HEK293 (cell line): ENCODE measurements at regions of chr11 and their contacts with region 1.

Region 1: GRCh38 chr11:35305670-35306382 is 113.5 kb downstream of the SLC1A2 start:
- H3K4me3 ChIP-seq: no peak overlapping the region
- H3K27ac ChIP-seq: no peak overlapping the region
- H3K4me1 ChIP-seq: no peaks in the 10 kb centered on the region
- CTCF ChIP-seq: peak; percentile 30; the same call in 1 of the 2 replicates

Region 2: GRCh38 chr11:34926101-34926830 is 379.6 kb before region 1 on chr11:
- CTCF ChIA-PET with region 1: interaction called, 10 read pairs
- POLR2A ChIA-PET with region 1: no interaction called
- H3K4me3 ChIP-seq: no peak overlapping the region
- H3K27ac ChIP-seq: no peak overlapping the region
- H3K4me1 ChIP-seq: 0 out of 2 replicates have a peak, but pooled peaks cover 4% of the 10 kb centered on the region
- CTCF ChIP-seq: peak; percentile 33; the same call in 1 of the 2 replicates